KBM-7 (cell line): ENCODE measurements at regions of chr1 and their contacts with region 1.

Region 1: DNA sequence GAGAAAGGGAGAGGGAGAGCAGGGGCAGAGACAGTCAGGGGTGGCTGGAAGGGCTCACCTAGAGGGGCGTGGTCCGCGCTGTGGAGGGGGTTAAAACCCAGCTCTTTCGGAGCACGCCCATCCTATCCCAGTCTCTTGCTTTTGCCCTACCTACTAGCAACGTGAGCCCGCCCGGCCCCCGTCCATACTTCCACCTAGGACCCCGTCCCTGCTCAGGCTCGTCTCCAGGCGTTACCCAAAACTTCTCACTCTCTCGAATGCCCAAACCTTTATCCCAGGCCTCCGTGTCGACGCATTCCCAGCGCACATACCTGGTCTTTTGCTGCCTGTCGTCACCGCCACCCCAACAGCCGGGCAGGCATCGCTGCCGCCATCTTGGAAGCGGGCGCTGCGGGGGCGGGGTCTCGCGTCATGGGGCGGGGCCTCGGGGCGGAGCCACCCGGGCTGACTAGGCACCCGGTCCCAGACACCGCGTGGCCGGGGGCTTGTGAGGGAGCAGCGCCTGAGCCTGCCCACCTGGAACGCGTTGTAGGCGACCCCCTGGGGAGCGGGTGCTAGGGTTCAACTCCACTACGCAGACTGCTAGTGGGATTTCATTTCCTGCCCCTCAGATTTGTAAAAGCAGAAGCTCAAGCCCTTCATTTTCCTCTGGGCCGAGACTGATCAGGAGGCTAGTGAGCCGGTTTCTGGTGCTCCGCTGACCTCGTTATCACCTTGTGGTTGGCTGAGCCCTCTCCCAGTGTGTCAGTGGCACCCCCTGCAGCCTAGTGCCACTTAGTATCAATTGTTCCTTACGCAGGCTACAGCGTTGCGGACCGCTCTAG is at the start of gene B4GALT3:
- DNase-seq: peak; percentile 86

Region 2: GRCh38 chr1:161399257-161399998 is 222.1 kb after region 1 on chr1:
- in situ Hi-C with region 1: loop called (anchors 25 kb)
- DNase-seq: peak; percentile 97